CD8-positive, alpha-beta T cell (primary cell): ENCODE measurements at regions of chr9 and their contacts with region 1.

Region 1: GRCh38 chr9:124708633-124709291 is 62.3 kb downstream of the NR6A1 start:
- DNase-seq: no peak
- ATAC-seq: no peak
- H3K4me3 ChIP-seq: no peak overlapping the region
- H3K4me3 Mint-ChIP-seq: no peak overlapping the region
- H3K27ac ChIP-seq: no peak overlapping the region
- H3K27ac Mint-ChIP-seq: no peak overlapping the region
- H3K4me1 ChIP-seq: no peaks in the 10 kb centered on the region
- H3K4me1 Mint-ChIP-seq: no peaks in the 10 kb centered on the region
- H3K27me3 ChIP-seq: no peaks in the 10 kb centered on the region
- H3K27me3 Mint-ChIP-seq: peaks cover 27% of the 10 kb centered on the region
- CTCF ChIP-seq: no peak

Region 2: GRCh38 chr9:124503713-124504529 is 204.8 kb before region 1 on chr9:
- CTCF ChIA-PET with region 1: no interaction called
- POLR2A ChIA-PET with region 1: no interaction called
- intact Hi-C with region 1: no loop called
- DNase-seq: no peak
- ATAC-seq: no peak
- H3K4me3 ChIP-seq: peak overlapping the region in 1 of 2 experiments; percentile 37
- H3K4me3 Mint-ChIP-seq: peak overlapping the region; percentile 85
- H3K27ac ChIP-seq: no peak overlapping the region
- H3K27ac Mint-ChIP-seq: no peak overlapping the region
- H3K4me1 ChIP-seq: peaks cover 7% of the 10 kb centered on the region
- H3K4me1 Mint-ChIP-seq: peaks cover 8% of the 10 kb centered on the region
- H3K27me3 ChIP-seq: peaks cover 11 to 13% of the 10 kb centered on the region in 2 experiments
- H3K27me3 Mint-ChIP-seq: peaks cover 28% of the 10 kb centered on the region
- CTCF ChIP-seq: no peak

Region 3: DNA sequence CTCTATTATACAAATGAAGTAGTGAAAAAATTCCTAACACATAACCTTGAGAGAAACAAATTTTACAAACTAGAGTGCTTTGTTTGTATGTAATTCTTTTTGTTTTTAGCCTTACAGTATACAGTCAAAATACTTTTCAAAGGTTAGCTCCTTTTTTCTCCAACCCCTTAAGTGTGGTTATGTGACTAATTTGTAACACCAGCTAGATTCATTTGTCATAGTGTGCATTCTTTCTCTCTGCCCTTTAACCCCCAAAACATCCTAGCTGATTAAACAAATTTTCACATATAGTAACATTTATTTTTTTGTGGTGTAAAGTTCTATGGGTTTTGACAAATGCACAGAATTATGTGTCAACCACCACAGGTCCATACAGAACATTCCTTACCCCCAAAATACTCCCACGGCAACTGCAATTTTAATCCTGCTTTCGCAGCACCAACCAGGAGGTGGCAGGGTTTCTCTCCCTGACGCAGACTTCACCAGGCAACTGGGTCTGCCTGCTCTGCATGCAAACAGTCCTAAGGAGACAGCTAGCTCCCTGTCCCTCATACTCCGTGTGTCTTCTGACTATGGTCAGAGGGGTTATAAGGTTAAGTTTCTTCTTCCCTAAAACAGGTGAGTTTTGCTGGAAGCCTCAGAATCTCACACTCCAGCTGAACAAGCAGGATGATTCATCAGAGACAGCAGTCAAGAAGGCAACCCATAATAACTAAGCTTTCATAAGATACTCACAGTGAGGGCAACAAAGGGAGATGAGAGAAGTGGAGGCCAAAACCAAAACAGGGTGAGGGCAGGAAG is 157.1 kb before region 1 on chr9:
- CTCF ChIA-PET with region 1: interaction called, 3 read pairs
- POLR2A ChIA-PET with region 1: no interaction called
- intact Hi-C with region 1: loop called in 1 of 2 experiments (anchors 5 kb)
- DNase-seq: peak in 4 of 9 experiments; percentile 6 to 40 (median 17)
- ATAC-seq: peak; percentile 48
- H3K4me3 ChIP-seq: no peak overlapping the region
- H3K4me3 Mint-ChIP-seq: no peak overlapping the region
- H3K27ac ChIP-seq: no peak overlapping the region
- H3K27ac Mint-ChIP-seq: no peak overlapping the region
- H3K4me1 ChIP-seq: peaks cover 14% of the 10 kb centered on the region
- H3K4me1 Mint-ChIP-seq: peaks cover 10% of the 10 kb centered on the region
- H3K27me3 ChIP-seq: no peaks in the 10 kb centered on the region
- H3K27me3 Mint-ChIP-seq: peaks cover 3% of the 10 kb centered on the region
- CTCF ChIP-seq: peak; percentile 32

Region 4: GRCh38 chr9:124617471-124618141 is 91.2 kb before region 1 on chr9:
- CTCF ChIA-PET with region 1: interaction called, 96 read pairs
- POLR2A ChIA-PET with region 1: interaction called, 3 read pairs
- intact Hi-C with region 1: loop called (anchors 1 kb)
- DNase-seq: peak; percentile 41 to 82 (median 74)
- ATAC-seq: peak; percentile 73
- H3K4me3 ChIP-seq: no peak overlapping the region
- H3K4me3 Mint-ChIP-seq: no peak overlapping the region
- H3K27ac ChIP-seq: no peak overlapping the region
- H3K27ac Mint-ChIP-seq: no peak overlapping the region
- H3K4me1 ChIP-seq: no peaks in the 10 kb centered on the region
- H3K4me1 Mint-ChIP-seq: no peaks in the 10 kb centered on the region
- H3K27me3 ChIP-seq: peaks cover 0 to 4% of the 10 kb centered on the region in 2 experiments
- H3K27me3 Mint-ChIP-seq: peaks cover 9% of the 10 kb centered on the region
- CTCF ChIP-seq: peak; percentile 80

Region 5: GRCh38 chr9:124658165-124659017 is 50.4 kb before region 1 on chr9:
- CTCF ChIA-PET with region 1: interaction called, 8 read pairs
- POLR2A ChIA-PET with region 1: interaction called, 4 read pairs
- intact Hi-C with region 1: loop called in 1 of 2 experiments (anchors 2 kb)
- DNase-seq: peak in 8 of 9 experiments; percentile 14 to 76 (median 40)
- ATAC-seq: peak; percentile 80
- H3K4me3 ChIP-seq: peak overlapping the region; percentile 55 to 60
- H3K4me3 Mint-ChIP-seq: peak overlapping the region; percentile 96
- H3K27ac ChIP-seq: peak overlapping the region; percentile 41 to 60
- H3K27ac Mint-ChIP-seq: peak overlapping the region; percentile 92
- H3K4me1 ChIP-seq: peaks cover 16% of the 10 kb centered on the region
- H3K4me1 Mint-ChIP-seq: peaks cover 30% of the 10 kb centered on the region
- H3K27me3 ChIP-seq: no peaks in the 10 kb centered on the region
- H3K27me3 Mint-ChIP-seq: peaks cover 3% of the 10 kb centered on the region
- CTCF ChIP-seq: no peak

Region 6: GRCh38 chr9:124812401-124813016 is 103.7 kb after region 1 on chr9:
- CTCF ChIA-PET with region 1: no interaction called
- POLR2A ChIA-PET with region 1: no interaction called
- intact Hi-C with region 1: no loop called
- DNase-seq: no peak
- ATAC-seq: no peak
- H3K4me3 ChIP-seq: no peak overlapping the region
- H3K4me3 Mint-ChIP-seq: no peak overlapping the region
- H3K27ac ChIP-seq: no peak overlapping the region
- H3K27ac Mint-ChIP-seq: no peak overlapping the region
- H3K4me1 ChIP-seq: no peaks in the 10 kb centered on the region
- H3K4me1 Mint-ChIP-seq: no peaks in the 10 kb centered on the region
- H3K27me3 ChIP-seq: no peaks in the 10 kb centered on the region
- H3K27me3 Mint-ChIP-seq: peaks cover 11% of the 10 kb centered on the region
- CTCF ChIP-seq: no peak

Region 7: DNA sequence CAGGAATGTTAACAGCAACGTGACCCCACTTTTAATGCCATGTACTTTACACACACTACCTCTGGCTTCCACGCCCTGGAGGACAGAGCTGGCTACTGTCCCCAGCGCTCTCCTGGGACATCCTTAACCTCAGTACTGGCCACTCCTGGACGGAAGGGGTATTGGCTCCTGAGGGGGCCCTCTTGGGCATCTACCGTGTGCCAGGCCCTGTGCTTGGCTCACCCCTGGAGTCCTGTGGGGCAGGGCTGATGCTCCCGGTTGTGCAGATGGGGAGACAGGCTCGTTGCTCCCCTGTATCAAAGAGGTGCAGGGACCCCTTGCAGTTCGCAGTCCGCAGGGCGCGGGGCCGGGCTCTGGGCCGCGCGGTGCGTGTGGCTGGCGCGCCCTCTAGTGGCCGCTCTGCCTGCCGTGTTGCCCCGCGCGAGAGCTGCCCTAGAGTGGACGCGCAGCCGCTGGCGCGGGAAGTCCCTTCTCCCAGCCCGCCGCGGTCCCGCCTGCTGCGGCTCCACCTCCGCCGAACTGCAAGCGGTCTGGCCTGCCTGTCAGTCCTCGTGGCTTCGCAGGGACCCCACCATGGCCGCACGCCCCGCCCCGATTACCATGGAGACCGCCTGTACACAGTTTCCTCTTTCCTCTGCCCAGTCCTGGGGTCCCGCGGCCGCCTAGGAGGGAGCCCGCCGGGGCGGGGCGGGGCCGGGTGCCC is 144.2 kb after region 1 on chr9 and contains the start of gene WDR38:
- CTCF ChIA-PET with region 1: no interaction called
- POLR2A ChIA-PET with region 1: no interaction called
- intact Hi-C with region 1: loop called in 1 of 2 experiments (anchors 5 kb)
- DNase-seq: peak; percentile 64 to 95 (median 80)
- ATAC-seq: peak; percentile 83
- H3K4me3 ChIP-seq: peak within 1 kb of the TSS; percentile 37 to 44
- H3K4me3 Mint-ChIP-seq: peak within 1 kb of the TSS; percentile 65
- H3K27ac ChIP-seq: peak within 1 kb of the TSS in 1 of 2 experiments; percentile 73
- H3K27ac Mint-ChIP-seq: peak within 1 kb of the TSS; percentile 64
- H3K4me1 ChIP-seq: peaks cover 12% of the 10 kb centered on the region
- H3K4me1 Mint-ChIP-seq: peaks cover 9% of the 10 kb centered on the region
- H3K27me3 ChIP-seq: no peaks in the 10 kb centered on the region
- H3K27me3 Mint-ChIP-seq: peaks cover 9% of the 10 kb centered on the region
- CTCF ChIP-seq: peak; percentile 98
- total RNA-seq, gene WDR38: not detected

Region 8: GRCh38 chr9:124894741-124895170 is 186.0 kb after region 1 on chr9:
- CTCF ChIA-PET with region 1: no interaction called
- POLR2A ChIA-PET with region 1: no interaction called
- intact Hi-C with region 1: loop called (anchors 2 kb)
- DNase-seq: peak in 8 of 9 experiments; percentile 21 to 83 (median 53)
- ATAC-seq: peak; percentile 97
- H3K4me3 ChIP-seq: no peak overlapping the region
- H3K4me3 Mint-ChIP-seq: no peak overlapping the region
- H3K27ac ChIP-seq: no peak overlapping the region
- H3K27ac Mint-ChIP-seq: peak overlapping the region; percentile 81
- H3K4me1 ChIP-seq: no peaks in the 10 kb centered on the region
- H3K4me1 Mint-ChIP-seq: peaks cover 13% of the 10 kb centered on the region
- H3K27me3 ChIP-seq: peaks cover 0 to 7% of the 10 kb centered on the region in 2 experiments
- H3K27me3 Mint-ChIP-seq: peaks cover 13% of the 10 kb centered on the region
- CTCF ChIP-seq: peak; percentile 63

Region 9: GRCh38 chr9:125374443-125375309 is 665.9 kb after region 1 on chr9:
- CTCF ChIA-PET with region 1: no interaction called
- POLR2A ChIA-PET with region 1: no interaction called
- intact Hi-C with region 1: loop called (anchors 1 to 2 kb)
- DNase-seq: peak; percentile 25 to 77 (median 58)
- ATAC-seq: peak; percentile 96
- H3K4me3 ChIP-seq: no peak overlapping the region
- H3K4me3 Mint-ChIP-seq: peak overlapping the region; percentile 64
- H3K27ac ChIP-seq: no peak overlapping the region
- H3K27ac Mint-ChIP-seq: no peak overlapping the region
- H3K4me1 ChIP-seq: peaks cover 11% of the 10 kb centered on the region
- H3K4me1 Mint-ChIP-seq: peaks cover 10% of the 10 kb centered on the region
- H3K27me3 ChIP-seq: no peaks in the 10 kb centered on the region
- H3K27me3 Mint-ChIP-seq: peaks cover 10% of the 10 kb centered on the region
- CTCF ChIP-seq: peak; percentile 76